Dorsolateral prefrontal cortex (tissue), 120 donors: ENCODE measurements at regions of chr21 and their contacts with region 1.

Region 1: DNA sequence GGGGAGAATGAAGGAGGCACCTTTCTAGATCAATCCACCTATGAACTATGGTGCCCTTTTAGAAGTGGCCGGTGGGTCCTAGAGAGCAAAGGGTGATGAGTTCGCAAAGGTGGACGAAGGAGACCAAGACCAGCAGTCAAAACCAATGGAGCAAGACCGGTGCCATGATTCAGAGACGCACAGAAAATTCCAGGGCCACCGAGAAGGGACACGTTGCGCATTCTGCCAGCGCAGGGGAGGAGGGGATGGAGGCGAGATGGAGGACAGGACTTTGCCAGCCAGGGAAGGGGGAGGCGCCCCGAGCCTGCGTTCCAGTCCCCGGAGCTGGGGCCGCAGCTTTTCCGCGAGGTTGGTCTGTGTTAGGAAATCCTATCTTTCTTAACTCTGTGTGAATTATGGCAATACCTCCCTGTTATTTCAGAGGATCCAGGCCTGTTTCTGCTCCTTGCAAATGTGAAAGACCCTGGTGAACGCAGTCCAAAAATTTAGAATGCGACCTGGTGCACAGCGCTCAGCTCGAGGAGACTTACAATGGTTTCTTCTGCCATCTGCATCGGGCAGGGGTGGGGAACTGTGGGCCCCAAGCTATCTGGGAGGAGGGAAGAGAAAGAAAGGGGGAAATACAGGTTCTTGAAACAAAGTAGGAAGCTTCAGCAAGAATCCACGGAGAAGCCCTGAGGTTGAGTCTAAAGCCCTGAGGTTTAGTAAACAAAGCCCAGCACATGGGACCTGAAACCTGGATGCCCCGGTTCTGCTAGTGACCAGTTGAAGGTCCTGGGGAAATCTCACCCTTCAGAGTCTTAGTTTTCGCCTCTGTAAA is 129.4 kb downstream of the MRPS6 start:
- DNase-seq: peak in 1 of 10 donors; percentile 6
- H3K4me3 ChIP-seq: peak overlapping the region in 29 of 59 donors; percentile 1 to 74 (median 63)
- H3K27ac ChIP-seq: peak overlapping the region in 53 of 59 donors; percentile 7 to 95 (median 79)
- H3K27me3 ChIP-seq: peaks cover 0 to 3% (median 0%) of the 10 kb centered on the region in 45 donors
- CTCF ChIP-seq: no peak

Region 2: DNA sequence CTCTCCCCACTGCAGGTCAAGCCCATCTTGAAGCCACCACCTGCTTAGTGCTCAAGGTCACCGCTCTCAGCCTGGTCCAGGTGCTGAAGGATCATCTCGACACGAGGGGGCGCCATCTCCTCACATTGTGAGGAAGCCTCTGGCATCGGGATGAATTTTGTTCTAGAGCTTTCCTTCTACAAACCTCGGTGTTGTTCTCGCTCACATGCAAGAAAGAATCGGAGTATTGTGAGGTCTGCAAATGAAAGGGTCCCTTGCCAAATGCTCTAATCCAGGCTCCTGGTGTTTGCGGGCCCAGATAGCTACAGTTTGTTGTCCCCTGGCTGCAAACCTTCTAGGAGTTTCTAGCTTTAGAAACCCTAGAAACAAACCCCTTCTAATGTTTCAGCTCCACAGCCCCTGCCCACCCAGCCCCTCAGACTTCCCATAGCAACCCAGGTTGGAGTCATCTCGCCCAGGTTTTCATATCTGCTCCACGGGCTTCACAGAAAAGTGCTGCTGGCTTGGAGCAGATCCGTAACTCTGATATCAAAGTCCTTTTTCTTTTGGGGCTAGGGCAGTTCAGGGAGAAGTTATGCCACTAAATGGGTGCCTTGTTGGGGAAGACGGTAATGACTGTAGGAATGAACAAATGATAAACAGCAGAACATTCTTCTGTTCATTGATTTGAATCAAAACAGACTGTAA is 278.5 kb before region 1 on chr21:
- intact Hi-C with region 1: loop called (anchors 2 to 10 kb)
- DNase-seq: peak; percentile 84 to 94 (median 90)
- H3K4me3 ChIP-seq: peak overlapping the region in 18 of 59 donors; percentile 5 to 43 (median 24)
- H3K27ac ChIP-seq: peak overlapping the region; percentile 51 to 98 (median 91)
- H3K27me3 ChIP-seq: no peaks in the 10 kb centered on the region
- CTCF ChIP-seq: peak; percentile 81 to 99 (median 97)

Region 3: DNA sequence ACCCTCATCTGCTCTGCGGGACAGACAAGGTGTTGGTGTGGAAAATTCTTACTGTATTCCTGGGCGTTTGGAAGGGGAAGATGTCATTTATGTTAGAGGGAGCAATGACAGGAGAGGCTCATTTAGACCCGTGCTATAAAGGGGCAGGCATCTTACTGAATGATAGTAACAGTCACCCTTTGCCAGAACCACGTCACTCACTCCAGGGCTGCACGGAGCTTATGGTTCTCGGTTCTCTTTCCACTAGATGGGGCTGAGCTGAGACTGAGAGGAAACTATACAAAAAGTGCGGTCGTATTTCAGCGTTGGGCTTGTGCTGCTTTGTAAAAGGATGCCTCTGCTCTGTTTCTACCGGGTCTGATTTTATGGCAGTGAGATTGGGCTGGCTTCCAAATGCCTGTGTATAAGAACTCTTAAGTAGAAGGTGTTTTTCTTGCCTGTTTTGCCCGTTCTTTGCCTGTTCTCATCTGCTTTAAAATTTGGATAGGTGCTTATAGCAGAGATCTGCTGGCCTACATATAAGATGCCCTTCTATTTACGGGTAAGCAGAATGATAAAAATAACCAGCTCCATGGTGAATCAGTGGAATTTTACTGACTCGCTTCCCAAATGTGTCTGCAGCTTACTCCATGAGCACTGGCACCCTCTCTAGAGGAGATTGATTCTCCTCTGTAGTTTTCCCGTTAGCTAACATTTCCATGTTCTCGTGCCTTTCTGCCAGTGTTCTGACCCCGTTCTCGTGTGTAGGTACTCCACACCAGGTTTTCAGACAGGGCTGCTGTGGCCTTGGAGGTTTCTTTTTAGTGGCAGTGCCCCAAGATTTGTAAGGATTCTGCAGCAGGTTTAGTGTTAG is 73.5 kb before region 1 on chr21:
- intact Hi-C with region 1: loop called (anchors 5 kb)
- DNase-seq: peak in 7 of 10 donors; percentile 46 to 74 (median 63)
- H3K4me3 ChIP-seq: peak overlapping the region in 44 of 59 donors; percentile 1 to 43 (median 22)
- H3K27ac ChIP-seq: peak overlapping the region in 58 of 59 donors; percentile 56 to 98 (median 90)
- H3K27me3 ChIP-seq: peaks cover 0 to 5% (median 0%) of the 10 kb centered on the region in 45 donors
- CTCF ChIP-seq: peak in 54 of 56 donors; percentile 17 to 65 (median 45)

Region 4: DNA sequence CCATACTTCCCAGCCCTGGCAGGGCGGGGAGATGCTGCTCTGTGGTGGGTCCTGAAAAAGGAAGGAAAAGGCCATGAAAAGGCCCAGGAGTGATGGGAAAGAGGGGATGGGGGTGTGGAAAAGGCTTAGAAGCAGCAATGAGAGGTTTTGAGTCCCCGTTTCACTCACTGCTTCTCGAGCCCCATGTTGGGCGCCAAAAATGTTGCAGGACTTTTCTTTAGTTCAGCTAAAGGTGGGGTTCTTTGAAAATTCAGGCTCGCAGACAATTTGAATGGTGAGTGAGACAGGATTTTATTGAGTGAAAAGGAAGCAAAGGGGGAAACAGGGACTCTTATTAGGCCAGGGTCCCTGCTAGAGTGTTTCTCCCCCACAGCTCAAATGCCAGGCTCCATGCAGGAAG is 36.3 kb before region 1 on chr21:
- intact Hi-C with region 1: no loop called
- DNase-seq: no peak
- H3K4me3 ChIP-seq: no peak overlapping the region
- H3K27ac ChIP-seq: no peak overlapping the region
- H3K27me3 ChIP-seq: peaks cover 0 to 22% (median 0%) of the 10 kb centered on the region in 45 donors
- CTCF ChIP-seq: no peak

Region 5: GRCh38 chr21:34330055-34330454 is 127.3 kb after region 1 on chr21:
- intact Hi-C with region 1: no loop called
- DNase-seq: no peak
- H3K4me3 ChIP-seq: no peak overlapping the region
- H3K27ac ChIP-seq: no peak overlapping the region
- H3K27me3 ChIP-seq: no peaks in the 10 kb centered on the region
- CTCF ChIP-seq: no peak

Region 6: GRCh38 chr21:34345091-34345871 is 142.5 kb after region 1 on chr21:
- intact Hi-C with region 1: loop called (anchors 5 kb)
- DNase-seq: no peak
- H3K4me3 ChIP-seq: no peak overlapping the region
- H3K27ac ChIP-seq: peak overlapping the region in 40 of 59 donors; percentile 2 to 80 (median 48)
- H3K27me3 ChIP-seq: no peaks in the 10 kb centered on the region
- CTCF ChIP-seq: no peak